GM10248 (cell line): ENCODE measurements at regions of chr7 and their contacts with region 1.

Region 1: GRCh38 chr7:4085937-4086691 is 596.0 kb upstream of the FOXK1 start:
- DNase-seq: no peak
- CTCF ChIP-seq: no peak

Region 2: GRCh38 chr7:3533040-3533439 is 553.1 kb before region 1 on chr7:
- CTCF ChIA-PET with region 1: no interaction called
- POLR2A ChIA-PET with region 1: no interaction called
- DNase-seq: no peak
- CTCF ChIP-seq: no peak

Region 3: DNA sequence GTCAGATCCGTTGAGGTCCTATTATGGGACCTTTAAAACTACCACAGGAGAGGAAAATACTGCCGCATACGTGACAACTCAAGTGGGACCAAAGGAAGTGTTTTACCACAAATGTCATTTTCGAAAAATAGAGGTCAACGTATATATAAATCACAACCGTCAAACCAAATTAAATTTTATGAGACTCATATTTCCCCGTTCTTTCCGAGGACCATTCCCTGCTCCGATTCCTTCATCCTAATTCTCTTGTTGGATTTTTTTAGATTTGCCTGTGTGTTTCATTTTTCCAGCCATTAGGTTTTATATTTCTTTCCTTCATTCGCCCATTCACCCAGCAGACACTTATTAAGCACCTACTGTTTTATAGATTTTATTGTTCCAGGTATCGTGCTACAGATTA is 12.1 kb after region 1 on chr7:
- CTCF ChIA-PET with region 1: no interaction called
- POLR2A ChIA-PET with region 1: interaction called, 12 read pairs
- DNase-seq: no peak
- CTCF ChIP-seq: no peak